HEK293 (cell line): ENCODE measurements at regions of chr17 and their contacts with region 1.

Region 1: GRCh38 chr17:7177196-7177953 is 1.8 kb downstream of the ASGR1 start:
- H3K4me3 ChIP-seq: peak overlapping the region; percentile 54
- H3K27ac ChIP-seq: peak overlapping the region; percentile 39; the same call in 1 of the 2 replicates
- H3K4me1 ChIP-seq: peaks cover 8% of the 10 kb centered on the region
- CTCF ChIP-seq: peak; percentile 88

Region 2: DNA sequence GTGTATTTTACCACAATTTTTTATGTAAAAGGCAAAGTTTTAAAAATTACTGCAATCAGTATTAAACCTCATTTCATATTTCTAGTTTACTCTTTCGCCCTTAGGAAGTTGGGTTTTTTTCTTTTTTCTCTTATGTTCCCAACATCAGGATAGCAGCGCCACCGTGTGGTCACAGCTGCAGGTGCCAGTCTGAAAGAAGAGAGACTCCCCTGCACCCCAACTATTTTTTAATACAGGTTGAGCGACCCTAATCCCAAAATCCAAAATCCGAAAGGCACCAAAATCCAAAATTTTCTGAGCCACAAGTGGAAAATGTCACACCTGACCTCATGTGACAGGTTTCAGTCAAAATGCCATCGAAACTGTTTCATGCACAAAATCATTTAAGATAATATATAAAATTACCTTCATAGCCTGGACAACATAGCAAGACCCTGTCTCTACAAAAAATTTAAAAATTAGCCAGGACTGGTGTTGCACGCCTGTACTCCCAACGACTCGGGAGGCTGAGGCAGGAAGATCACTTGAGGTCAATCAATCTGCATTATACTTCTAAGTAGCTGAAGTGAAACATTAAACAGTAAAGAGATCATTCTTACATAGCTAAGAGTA is 41.0 kb before region 1 on chr17:
- CTCF ChIA-PET with region 1: interaction called, 15 read pairs
- POLR2A ChIA-PET with region 1: no interaction called
- H3K4me3 ChIP-seq: no peak overlapping the region; the same call in 1 of the 2 replicates
- H3K27ac ChIP-seq: no peak overlapping the region
- H3K4me1 ChIP-seq: no peaks in the 10 kb centered on the region
- CTCF ChIP-seq: peak; percentile 44; the same call in 1 of the 2 replicates

Region 3: DNA sequence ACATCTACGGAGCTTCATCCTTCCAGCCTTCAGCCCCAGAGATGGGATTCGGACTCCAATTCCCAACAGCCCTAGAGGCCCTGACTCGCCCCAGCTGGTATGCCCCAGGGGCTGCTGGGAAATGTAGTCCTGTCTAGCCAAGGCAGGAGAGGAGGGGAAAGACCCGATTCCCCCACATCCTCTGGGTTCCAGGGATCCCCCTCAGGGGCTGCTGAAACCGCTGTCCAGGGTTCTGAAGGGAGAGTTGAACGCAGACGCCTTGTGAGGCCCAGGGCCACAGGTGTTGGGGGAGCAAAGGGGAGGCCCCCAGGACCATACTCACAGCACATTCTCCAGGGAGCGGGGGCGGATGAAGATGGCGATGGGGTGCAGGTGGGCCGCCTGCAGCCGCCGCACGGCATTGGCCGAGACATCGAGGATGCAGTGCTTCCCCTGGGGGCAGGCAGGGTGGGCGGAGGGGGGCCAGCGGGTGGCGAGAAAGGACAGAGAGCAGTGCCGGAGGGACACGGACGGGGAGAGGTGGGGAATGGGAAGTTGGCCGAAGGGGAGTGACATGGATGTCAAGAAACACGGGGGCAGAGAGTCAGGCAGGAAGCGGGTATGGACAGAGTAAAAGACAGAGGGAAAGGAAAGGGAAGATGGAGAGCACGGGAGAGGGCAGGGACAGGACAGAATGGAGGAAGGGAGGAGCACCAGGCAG is 14.3 kb after region 1 on chr17:
- CTCF ChIA-PET with region 1: interaction called, 16 read pairs
- POLR2A ChIA-PET with region 1: interaction called, 3 read pairs
- H3K4me3 ChIP-seq: no peak overlapping the region
- H3K27ac ChIP-seq: no peak overlapping the region
- H3K4me1 ChIP-seq: no peaks in the 10 kb centered on the region
- CTCF ChIP-seq: no peak

Region 4: DNA sequence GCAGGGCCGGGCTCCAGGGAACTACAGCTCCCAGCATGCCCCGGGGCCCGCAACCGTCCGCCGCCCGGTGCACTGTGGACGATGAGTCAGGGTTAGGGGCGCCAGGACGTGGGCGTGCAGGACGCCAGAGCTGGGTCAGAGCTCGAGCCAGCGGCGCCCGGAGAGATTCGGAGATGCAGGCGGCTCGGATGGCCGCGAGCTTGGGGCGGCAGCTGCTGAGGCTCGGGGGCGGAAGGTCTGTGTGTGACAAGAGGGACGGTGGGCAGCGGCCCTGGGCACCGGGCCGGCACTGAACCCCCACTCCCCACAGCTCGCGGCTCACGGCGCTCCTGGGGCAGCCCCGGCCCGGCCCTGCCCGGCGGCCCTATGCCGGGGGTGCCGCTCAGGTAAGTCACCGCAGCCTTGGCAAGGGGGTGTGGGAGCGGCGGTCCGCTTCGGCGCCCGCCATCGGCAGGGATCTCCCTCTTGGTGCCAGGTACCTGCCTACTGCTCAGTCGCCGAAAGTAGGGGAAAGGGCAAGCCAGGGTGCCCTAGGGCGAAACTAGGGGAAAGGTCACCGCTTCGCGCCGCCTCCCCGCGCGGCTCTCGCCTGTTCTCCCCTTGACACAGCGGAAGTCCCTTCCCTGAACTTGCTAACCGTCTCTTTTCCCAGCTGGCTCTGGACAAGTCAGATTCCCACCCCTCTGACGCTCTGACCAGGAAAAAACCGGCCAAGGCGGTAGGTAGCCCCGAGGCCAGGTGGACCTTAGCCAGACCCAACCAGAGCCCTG is 42.6 kb after region 1 on chr17 and contains the starts of genes ACADVL and DLG4:
- CTCF ChIA-PET with region 1: interaction called, 12 read pairs
- POLR2A ChIA-PET with region 1: interaction called, 13 read pairs
- H3K4me3 ChIP-seq: peak within 1 kb of the TSS; percentile 83
- H3K27ac ChIP-seq: peak within 1 kb of the TSS; percentile 83; the same call in 1 of the 2 replicates
- H3K4me1 ChIP-seq: peaks cover 7% of the 10 kb centered on the region
- CTCF ChIP-seq: no peak

Region 5: GRCh38 chr17:7329374-7329996 is 152.1 kb after region 1 on chr17:
- CTCF ChIA-PET with region 1: interaction called, 3 read pairs
- POLR2A ChIA-PET with region 1: interaction called, 10 read pairs
- H3K4me3 ChIP-seq: peak overlapping the region; percentile 64
- H3K27ac ChIP-seq: peak overlapping the region; percentile 86
- H3K4me1 ChIP-seq: peaks cover 9% of the 10 kb centered on the region
- CTCF ChIP-seq: no peak

Region 6: DNA sequence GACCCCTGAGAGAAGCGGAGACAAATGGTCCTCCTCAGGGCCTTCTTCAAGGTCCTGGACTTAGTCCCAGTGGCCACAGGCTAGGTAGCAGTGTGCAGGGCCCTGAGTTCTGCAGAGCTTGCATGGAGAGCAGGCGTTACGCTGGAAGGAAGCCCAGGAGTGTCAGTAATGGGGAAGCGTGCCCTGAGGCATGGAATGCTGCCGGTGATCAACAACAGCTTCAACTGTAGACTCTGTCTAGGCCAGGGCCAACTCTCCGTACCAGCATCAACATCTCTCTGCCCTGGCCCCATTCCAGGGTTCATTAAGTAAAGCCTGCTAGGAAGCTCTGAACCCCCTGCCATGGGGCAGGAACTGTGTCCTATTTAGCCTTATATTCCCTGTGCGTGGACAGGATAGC is 202.9 kb after region 1 on chr17:
- CTCF ChIA-PET with region 1: no interaction called
- POLR2A ChIA-PET with region 1: no interaction called
- H3K4me3 ChIP-seq: peak overlapping the region; percentile 47; the same call in 1 of the 2 replicates
- H3K27ac ChIP-seq: no peak overlapping the region
- H3K4me1 ChIP-seq: no peaks in the 10 kb centered on the region
- CTCF ChIP-seq: no peak

Region 7: GRCh38 chr17:7644775-7645174 is 467.4 kb after region 1 on chr17:
- CTCF ChIA-PET with region 1: no interaction called
- POLR2A ChIA-PET with region 1: no interaction called
- H3K4me3 ChIP-seq: no peak overlapping the region
- H3K27ac ChIP-seq: no peak overlapping the region
- H3K4me1 ChIP-seq: no peaks in the 10 kb centered on the region
- CTCF ChIP-seq: no peak